ENCODE measurements at regions of chr10 and their contacts with region 1.

Region 1: DNA sequence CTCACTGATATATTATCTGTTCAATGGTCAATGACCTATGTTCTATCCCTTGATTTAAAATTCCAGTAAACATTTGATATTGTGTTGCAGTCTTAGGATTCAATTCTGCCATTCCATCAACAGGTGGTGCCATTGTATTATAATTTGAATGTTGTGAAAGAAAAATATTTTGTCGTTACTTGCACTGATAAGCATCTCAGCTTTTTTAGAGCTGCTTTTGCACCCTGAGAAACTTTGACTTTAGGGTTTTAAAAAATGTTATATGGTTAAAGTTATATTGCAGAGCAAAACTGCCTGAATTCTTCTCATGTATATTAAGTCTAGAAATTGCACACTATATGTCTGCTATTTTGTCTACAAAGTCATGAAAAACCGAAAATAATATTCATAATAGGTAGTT is 18.8 kb upstream of the MINDY3 start:
- DNase-seq: peak in 5 of 9 donors; percentile 14 to 38 (median 34)
- ATAC-seq: peak; percentile 44
- H3K4me3 ChIP-seq: no peak overlapping the region
- H3K4me3 Mint-ChIP-seq: no peak overlapping the region
- H3K27ac ChIP-seq: no peak overlapping the region
- H3K27ac Mint-ChIP-seq: no peak overlapping the region
- H3K4me1 ChIP-seq: no peaks in the 10 kb centered on the region
- H3K4me1 Mint-ChIP-seq: no peaks in the 10 kb centered on the region
- H3K27me3 ChIP-seq: no peaks in the 10 kb centered on the region
- H3K27me3 Mint-ChIP-seq: peaks cover 42 to 72% (median 54%) of the 10 kb centered on the region in 5 donors

Region 2: DNA sequence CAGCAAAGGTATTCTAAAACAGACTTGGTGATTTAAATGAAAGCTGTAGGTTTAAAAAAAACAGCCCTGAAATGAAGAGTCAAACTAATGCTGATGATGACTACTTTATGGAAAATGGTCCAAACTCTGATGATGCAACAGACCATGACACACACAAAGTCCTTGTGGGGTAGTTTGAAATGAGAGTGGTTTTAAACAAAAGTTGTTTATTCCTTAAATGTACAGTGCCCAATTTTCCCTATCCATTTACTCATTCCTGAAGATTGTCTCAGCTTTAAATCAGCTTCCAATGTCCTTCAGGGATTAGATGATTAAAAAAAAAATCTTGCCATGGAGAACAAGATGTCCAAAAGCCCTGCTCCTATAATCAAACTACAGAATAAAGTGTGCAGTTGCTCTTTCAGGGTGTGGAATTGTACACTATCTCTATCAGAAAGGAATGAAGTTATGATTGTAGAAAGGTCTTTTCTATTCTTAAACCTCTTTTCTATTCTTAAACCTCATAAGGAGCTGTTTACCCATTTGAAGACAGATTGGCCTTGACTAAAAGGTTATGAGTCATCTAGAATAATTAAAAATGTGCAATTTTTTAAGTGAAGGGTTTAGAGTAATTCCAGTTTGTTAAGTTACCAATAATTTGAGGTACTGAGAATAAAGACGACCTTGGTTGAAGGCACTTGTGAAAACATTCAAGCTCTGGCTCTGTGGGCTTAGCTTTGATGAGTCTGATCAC is 89.1 kb before region 1 on chr10:
- CTCF ChIA-PET with region 1: no interaction called
- POLR2A ChIA-PET with region 1: no interaction called
- intact Hi-C with region 1: no loop called
- DNase-seq: no peak
- ATAC-seq: no peak
- H3K4me3 ChIP-seq: no peak overlapping the region
- H3K4me3 Mint-ChIP-seq: no peak overlapping the region
- H3K27ac ChIP-seq: no peak overlapping the region
- H3K27ac Mint-ChIP-seq: no peak overlapping the region
- H3K4me1 ChIP-seq: no peaks in the 10 kb centered on the region
- H3K4me1 Mint-ChIP-seq: peaks cover 0 to 7% (median 0%) of the 10 kb centered on the region in 7 donors
- H3K27me3 ChIP-seq: no peaks in the 10 kb centered on the region
- H3K27me3 Mint-ChIP-seq: no peaks in the 10 kb centered on the region

Region 3: GRCh38 chr10:15868016-15868415 is 11.0 kb before region 1 on chr10:
- CTCF ChIA-PET with region 1: no interaction called
- POLR2A ChIA-PET with region 1: no interaction called
- intact Hi-C with region 1: no loop called
- DNase-seq: no peak
- ATAC-seq: no peak
- H3K4me3 ChIP-seq: no peak overlapping the region
- H3K4me3 Mint-ChIP-seq: no peak overlapping the region
- H3K27ac ChIP-seq: no peak overlapping the region
- H3K27ac Mint-ChIP-seq: no peak overlapping the region
- H3K4me1 ChIP-seq: no peaks in the 10 kb centered on the region
- H3K4me1 Mint-ChIP-seq: no peaks in the 10 kb centered on the region
- H3K27me3 ChIP-seq: peaks cover 0 to 4% of the 10 kb centered on the region in 2 donors
- H3K27me3 Mint-ChIP-seq: peaks cover 60 to 90% (median 74%) of the 10 kb centered on the region in 5 donors

Region 4: DNA sequence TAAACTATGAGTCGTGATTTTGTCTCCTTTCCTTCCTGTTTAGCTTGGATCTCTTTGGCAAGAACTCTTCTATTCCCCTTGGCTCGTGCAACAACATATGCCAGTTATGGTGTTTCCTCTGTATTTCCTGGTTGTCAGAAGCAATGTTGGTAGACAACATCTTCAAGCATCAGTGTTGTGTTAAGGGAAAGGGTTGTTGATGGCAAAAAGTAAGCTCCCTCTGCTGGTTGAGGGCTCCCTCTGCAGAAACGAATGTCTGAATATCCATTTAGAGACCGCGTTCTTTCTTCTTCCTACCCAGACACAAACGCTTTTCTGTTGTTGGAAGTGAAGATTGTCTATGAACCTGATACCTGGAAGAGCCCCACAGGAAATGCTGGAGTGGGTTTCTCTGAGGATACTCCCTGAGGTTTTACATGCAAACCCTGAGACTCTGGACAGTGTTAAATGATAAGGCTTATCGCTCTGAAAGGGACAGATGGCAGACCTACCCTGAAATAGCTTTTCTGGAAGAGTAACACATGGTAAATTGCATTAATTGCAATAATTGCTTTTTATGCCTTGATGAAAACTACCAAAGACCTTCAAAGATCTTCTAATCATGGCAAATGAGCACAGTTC is 666.2 kb after region 1 on chr10:
- CTCF ChIA-PET with region 1: no interaction called
- POLR2A ChIA-PET with region 1: no interaction called
- intact Hi-C with region 1: loop called in 1 of 2 experiments (anchors 1 kb)
- DNase-seq: peak in 2 of 9 donors; percentile 19 to 22
- ATAC-seq: no peak
- H3K4me3 ChIP-seq: no peak overlapping the region
- H3K4me3 Mint-ChIP-seq: no peak overlapping the region
- H3K27ac ChIP-seq: no peak overlapping the region
- H3K27ac Mint-ChIP-seq: no peak overlapping the region
- H3K4me1 ChIP-seq: no peaks in the 10 kb centered on the region
- H3K4me1 Mint-ChIP-seq: peaks cover 0 to 6% (median 0%) of the 10 kb centered on the region in 7 donors
- H3K27me3 ChIP-seq: no peaks in the 10 kb centered on the region
- H3K27me3 Mint-ChIP-seq: peaks cover 15 to 48% (median 37%) of the 10 kb centered on the region in 5 donors

Region 5: DNA sequence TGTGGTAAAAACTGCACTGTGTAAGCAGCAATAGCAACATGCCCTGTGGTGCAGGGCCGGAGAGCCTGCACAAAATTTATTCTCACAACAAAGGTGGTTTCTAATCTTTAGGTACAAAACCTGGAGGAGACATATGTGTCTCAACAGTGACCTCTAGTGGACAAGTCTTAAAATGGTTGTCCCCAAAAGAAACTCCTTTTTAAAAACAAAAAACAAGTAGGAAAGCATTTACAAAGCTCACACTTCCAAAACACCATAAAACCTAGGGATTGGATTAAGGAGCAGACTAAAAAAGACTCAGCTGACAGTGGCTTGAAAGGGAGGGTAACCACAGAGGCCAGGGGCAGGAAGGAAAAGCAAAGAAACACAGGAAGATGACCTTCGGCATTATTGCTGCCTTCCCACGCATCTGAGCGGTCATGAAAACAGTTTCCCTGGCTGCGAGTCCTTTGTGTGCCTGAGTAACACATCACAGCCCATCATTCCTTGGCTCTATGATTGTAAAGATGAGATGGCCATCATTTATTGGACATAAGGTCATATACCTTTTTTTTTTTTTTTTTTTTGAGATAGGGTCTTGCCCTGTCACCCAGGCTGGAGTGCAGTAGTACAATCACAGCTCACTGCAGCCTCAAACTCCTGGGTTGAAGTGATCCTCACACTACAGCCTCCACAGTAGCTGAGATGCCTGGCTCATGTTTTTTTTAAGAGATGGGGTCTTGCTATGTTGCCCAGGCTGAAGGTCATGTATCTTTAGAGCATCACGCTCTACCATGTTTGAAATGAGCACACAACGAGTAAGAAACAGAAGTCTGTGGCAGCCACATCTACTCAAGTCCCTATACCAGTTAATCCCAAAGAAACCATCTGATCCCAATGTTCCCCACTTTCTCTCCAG is 898.7 kb after region 1 on chr10:
- CTCF ChIA-PET with region 1: interaction called, 3 read pairs
- POLR2A ChIA-PET with region 1: no interaction called
- intact Hi-C with region 1: loop called (anchors 1 kb)
- DNase-seq: peak in 7 of 9 donors; percentile 26 to 64 (median 56)
- ATAC-seq: peak; percentile 77
- H3K4me3 ChIP-seq: no peak overlapping the region
- H3K4me3 Mint-ChIP-seq: peak overlapping the region in 4 of 10 donors; percentile 14 to 42 (median 21)
- H3K27ac ChIP-seq: no peak overlapping the region
- H3K27ac Mint-ChIP-seq: peak overlapping the region in 8 of 9 donors; percentile 57 to 89 (median 84)
- H3K4me1 ChIP-seq: peaks cover 0 to 11% of the 10 kb centered on the region in 2 donors
- H3K4me1 Mint-ChIP-seq: peaks cover 20 to 40% (median 32%) of the 10 kb centered on the region in 7 donors
- H3K27me3 ChIP-seq: no peaks in the 10 kb centered on the region
- H3K27me3 Mint-ChIP-seq: no peaks in the 10 kb centered on the region

Region 6: DNA sequence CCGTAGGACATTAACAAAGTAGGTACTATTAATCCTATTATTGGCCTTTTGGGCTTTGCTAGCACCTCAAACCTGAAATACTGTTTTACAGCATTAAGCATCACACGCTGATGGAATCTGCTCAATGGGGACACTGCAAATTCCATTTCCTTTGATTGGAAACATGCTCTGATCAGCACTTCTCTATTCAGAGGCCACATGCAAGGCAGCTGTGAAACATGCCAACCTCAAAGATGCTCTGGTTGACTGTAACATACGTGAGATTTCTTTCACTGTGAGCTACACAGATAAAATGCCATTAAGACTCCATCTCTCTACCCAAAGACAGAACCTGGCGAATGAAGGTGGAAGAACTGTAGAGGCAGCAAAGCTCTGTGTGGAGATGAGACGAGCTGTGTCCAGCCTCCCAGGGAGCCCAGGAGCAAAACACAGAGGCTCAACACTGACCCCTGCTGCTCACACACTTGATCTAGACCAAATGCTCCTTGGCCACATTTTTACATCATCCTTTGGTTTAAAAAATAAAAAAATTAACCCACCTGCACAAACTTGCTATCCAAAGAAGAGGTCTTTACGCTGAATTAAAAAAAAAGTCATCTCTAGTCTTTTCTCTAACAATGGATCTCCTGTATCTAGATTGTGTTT is 930.1 kb after region 1 on chr10:
- CTCF ChIA-PET with region 1: no interaction called
- POLR2A ChIA-PET with region 1: no interaction called
- intact Hi-C with region 1: loop called in 1 of 2 experiments (anchors 1 kb)
- DNase-seq: peak in 3 of 9 donors; percentile 19 to 31 (median 23)
- ATAC-seq: peak; percentile 80
- H3K4me3 ChIP-seq: no peak overlapping the region
- H3K4me3 Mint-ChIP-seq: no peak overlapping the region
- H3K27ac ChIP-seq: no peak overlapping the region
- H3K27ac Mint-ChIP-seq: no peak overlapping the region
- H3K4me1 ChIP-seq: no peaks in the 10 kb centered on the region
- H3K4me1 Mint-ChIP-seq: peaks cover 11 to 41% (median 26%) of the 10 kb centered on the region in 7 donors
- H3K27me3 ChIP-seq: no peaks in the 10 kb centered on the region
- H3K27me3 Mint-ChIP-seq: no peaks in the 10 kb centered on the region

Measured in naive thymus-derived CD4-positive, alpha-beta T cell (primary cell).